ENCODE measurements at regions of chr5 and their contacts with region 1.

Region 1: DNA sequence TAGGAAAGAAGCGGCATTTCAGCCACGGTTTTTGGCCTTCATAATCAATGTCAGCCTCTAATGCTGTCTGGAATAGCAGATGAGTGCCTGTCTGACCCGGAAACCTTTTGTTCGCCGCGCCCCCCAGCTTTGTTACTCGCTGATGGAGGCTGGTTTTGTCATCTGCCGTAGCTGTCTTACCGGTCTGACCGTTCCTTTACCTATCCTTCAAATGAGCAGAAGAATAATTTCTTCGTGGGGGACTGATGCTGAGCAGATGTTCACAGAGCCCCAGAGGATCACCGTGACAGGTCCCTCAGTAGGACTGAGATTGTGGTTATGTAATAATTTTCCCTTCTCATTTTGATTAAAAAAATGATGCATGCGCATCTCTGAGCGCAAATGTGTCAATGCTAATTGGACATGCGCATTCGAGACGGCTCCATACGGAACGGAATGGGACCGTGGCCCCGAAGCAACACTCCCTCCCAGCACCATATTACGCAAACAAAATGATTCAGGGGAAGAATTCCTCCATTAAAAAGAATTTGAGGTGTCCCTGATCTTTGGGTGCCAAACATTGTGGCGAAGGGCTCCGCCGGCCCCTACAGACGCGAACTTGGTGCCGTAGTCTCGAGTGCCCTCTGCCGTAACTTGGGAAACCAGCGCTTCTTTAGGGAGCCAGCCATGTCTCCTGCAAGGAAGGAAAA is 27.6 kb downstream of the TLX3 start:
- DNase-seq: no peak
- H3K4me3 ChIP-seq: peak overlapping the region; percentile 38
- H3K27me3 ChIP-seq: peaks cover 4% of the 10 kb centered on the region
- CTCF ChIP-seq: peak; percentile 88

Region 2: GRCh38 chr5:169637549-169638121 is 1699.0 kb before region 1 on chr5:
- CTCF ChIA-PET with region 1: no interaction called
- POLR2A ChIA-PET with region 1: no interaction called
- DNase-seq: no peak
- H3K4me3 ChIP-seq: no peak overlapping the region; the same call in 1 of the 2 replicates
- H3K27me3 ChIP-seq: no peaks in the 10 kb centered on the region
- CTCF ChIP-seq: no peak

Region 3: DNA sequence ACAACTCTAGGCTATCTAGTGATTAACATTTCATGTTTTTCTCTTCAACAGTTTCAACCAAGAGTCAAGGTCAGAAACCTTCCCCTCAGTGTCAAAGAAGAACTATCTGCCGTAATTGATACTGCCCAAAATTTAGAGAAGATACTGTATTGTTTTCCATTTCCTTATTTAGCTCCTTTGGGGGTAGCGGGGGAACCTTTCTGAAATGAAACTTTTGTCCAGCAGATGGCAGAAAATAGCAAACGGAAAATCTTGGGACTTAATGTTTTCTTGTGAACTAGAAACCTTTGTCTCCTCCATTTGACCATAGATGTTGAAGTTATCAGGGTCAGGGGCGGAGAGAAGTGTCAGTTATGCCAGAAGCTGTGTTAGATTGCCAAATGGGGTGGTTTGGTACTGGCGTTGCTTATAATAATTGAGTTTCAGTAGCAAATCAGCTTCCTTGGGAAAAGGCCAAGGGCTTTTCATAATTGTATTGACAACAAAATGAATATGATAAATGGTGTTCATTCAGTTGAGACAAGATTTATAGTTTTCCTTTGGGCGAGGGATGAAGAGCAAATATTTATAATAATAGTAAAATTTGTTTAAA is 129.3 kb before region 1 on chr5:
- CTCF ChIA-PET with region 1: interaction called, 247 read pairs
- POLR2A ChIA-PET with region 1: no interaction called
- DNase-seq: peak; percentile 13
- H3K4me3 ChIP-seq: no peak overlapping the region
- H3K27me3 ChIP-seq: no peaks in the 10 kb centered on the region
- CTCF ChIP-seq: peak; percentile 59

Region 4: GRCh38 chr5:171323806-171324633 is 12.6 kb before region 1 on chr5:
- CTCF ChIA-PET with region 1: interaction called, 12 read pairs
- POLR2A ChIA-PET with region 1: no interaction called
- DNase-seq: no peak
- H3K4me3 ChIP-seq: no peak overlapping the region
- H3K27me3 ChIP-seq: peaks cover 36% of the 10 kb centered on the region
- CTCF ChIP-seq: no peak

Measured in BJ (cell line).